ENCODE measurements at regions of chr10 and their contacts with region 1.

Region 1: DNA sequence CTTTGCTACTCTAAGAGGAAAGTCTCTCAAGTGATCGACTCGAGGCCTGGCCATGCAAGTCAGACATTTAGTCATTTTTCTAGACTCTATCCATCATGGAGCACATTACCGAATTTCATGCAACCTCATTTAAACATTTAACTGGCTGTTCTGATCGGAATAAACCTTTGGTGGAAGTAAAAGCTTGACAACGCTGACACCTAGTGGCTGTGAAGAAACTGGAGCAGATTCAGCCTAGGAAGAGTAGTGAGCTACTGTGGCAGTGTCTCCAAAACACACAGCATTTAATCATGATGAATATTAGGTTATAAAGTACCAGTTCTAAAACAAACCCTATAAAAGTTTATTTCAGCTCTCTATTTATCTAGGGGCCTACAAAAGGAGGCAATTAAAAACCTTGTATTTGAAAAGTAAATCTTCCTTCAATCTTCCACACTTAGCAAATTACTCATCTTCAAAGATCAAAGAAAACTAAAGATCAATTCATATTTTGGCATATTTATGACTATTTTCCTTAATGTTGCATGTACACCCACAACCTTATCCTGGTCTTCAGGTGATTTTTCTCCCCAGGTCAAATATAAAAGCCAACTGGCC is 175.0 kb downstream of the CTNNA3 start:
- DNase-seq: peak; percentile 10
- H3K4me3 ChIP-seq: no peak overlapping the region
- H3K27ac ChIP-seq: no peak overlapping the region
- H3K27me3 ChIP-seq: no peaks in the 10 kb centered on the region
- CTCF ChIP-seq: peak; percentile 87

Region 2: GRCh38 chr10:67506082-67506756 is 14.8 kb before region 1 on chr10:
- CTCF ChIA-PET with region 1: interaction called, 12 read pairs
- POLR2A ChIA-PET with region 1: no interaction called
- DNase-seq: no peak
- H3K4me3 ChIP-seq: no peak overlapping the region
- H3K27ac ChIP-seq: no peak overlapping the region
- H3K27me3 ChIP-seq: no peaks in the 10 kb centered on the region
- CTCF ChIP-seq: no peak

Region 3: GRCh38 chr10:67533376-67533775 is 12.4 kb after region 1 on chr10:
- CTCF ChIA-PET with region 1: interaction called, 20 read pairs
- POLR2A ChIA-PET with region 1: no interaction called
- DNase-seq: no peak
- H3K4me3 ChIP-seq: no peak overlapping the region
- H3K27ac ChIP-seq: no peak overlapping the region
- H3K27me3 ChIP-seq: no peaks in the 10 kb centered on the region
- CTCF ChIP-seq: no peak

Region 4: GRCh38 chr10:67612577-67613537 is 91.8 kb after region 1 on chr10:
- CTCF ChIA-PET with region 1: interaction called, 10 read pairs
- POLR2A ChIA-PET with region 1: no interaction called
- DNase-seq: no peak
- H3K4me3 ChIP-seq: no peak overlapping the region
- H3K27ac ChIP-seq: no peak overlapping the region
- H3K27me3 ChIP-seq: no peaks in the 10 kb centered on the region
- CTCF ChIP-seq: no peak

Region 5: GRCh38 chr10:67705921-67706320 is 184.9 kb after region 1 on chr10:
- CTCF ChIA-PET with region 1: no interaction called
- POLR2A ChIA-PET with region 1: no interaction called
- DNase-seq: no peak
- H3K4me3 ChIP-seq: no peak overlapping the region
- H3K27ac ChIP-seq: no peak overlapping the region
- H3K27me3 ChIP-seq: no peaks in the 10 kb centered on the region
- CTCF ChIP-seq: no peak

Region 6: DNA sequence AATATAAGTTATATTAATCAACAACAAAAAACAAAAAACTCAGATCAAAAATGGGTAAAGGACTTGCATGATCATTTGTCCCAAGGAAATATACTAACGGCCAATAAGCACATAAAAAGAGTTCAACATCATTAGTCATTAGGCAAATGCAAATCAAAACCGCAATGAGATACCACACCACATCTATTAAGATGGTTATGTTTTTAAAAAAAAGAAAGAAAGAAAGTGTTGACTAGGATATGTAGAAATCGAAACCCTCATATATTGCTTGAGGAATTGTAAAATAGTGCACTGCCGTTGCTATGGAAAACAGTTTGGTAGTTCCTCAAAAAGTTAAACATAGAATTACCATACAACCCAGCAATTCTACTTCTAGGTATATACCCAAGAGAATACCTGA is 214.4 kb after region 1 on chr10:
- CTCF ChIA-PET with region 1: no interaction called
- POLR2A ChIA-PET with region 1: no interaction called
- DNase-seq: no peak
- H3K4me3 ChIP-seq: no peak overlapping the region
- H3K27ac ChIP-seq: no peak overlapping the region
- H3K27me3 ChIP-seq: no peaks in the 10 kb centered on the region
- CTCF ChIP-seq: no peak

Measured in AG04450 (cell line).